ENCODE measurements at regions of chr9 and their contacts with region 1.

Region 1: DNA sequence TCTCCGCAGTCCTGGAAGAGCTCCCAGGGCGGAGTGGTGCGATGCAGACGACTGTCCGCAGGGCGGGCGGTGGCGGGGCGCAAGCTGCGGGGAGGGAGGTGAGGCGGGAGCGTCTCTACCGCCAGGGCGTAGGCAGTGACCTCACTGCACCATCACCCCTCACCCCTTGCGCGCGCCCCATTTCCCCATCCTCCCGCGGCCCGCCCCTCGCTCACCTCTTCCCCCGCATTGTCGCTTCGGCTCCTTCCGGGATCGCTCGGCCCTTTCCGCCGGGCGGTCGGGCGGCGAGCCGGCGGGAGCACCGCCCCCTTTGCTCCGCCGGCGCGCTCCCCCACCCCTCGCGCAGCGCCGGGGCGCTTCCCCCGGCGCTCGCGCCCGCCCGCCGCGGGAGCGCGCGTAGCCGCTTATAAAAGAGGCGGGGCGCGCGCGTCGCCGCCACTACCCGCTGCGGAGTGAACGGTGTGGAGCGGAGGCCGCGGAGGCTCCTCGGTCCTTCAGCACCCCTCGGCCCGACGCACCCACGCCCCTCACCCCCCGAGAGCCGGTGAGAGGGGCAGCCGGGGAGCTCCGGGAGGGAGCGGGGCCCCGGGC is at the start of gene SPTAN1:
- DNase-seq: peak; percentile 92 to 97 (median 96)
- H3K4me3 ChIP-seq: peak within 1 kb of the TSS; percentile 80
- H3K27ac ChIP-seq: peak within 1 kb of the TSS; percentile 95 to 99
- H3K4me1 ChIP-seq: peaks cover 8% of the 10 kb centered on the region
- H3K27me3 ChIP-seq: no peaks in the 10 kb centered on the region
- CTCF ChIP-seq: peak in 1 of 3 donors; percentile 45
- EP300 ChIP-seq: peak; percentile 10
- POLR2A ChIP-seq: peak; percentile 99
- total RNA-seq, gene SPTAN1: 140 to 301 (median 261) TPM

Region 2: GRCh38 chr9:128361986-128362646 is 190.1 kb before region 1 on chr9:
- intact Hi-C with region 1: loop called in 1 of 4 experiments (anchors 5 kb)
- DNase-seq: peak; percentile 84 to 90 (median 86)
- H3K4me3 ChIP-seq: peak overlapping the region; percentile 19
- H3K27ac ChIP-seq: peak overlapping the region in 1 of 2 donors; percentile 27
- H3K4me1 ChIP-seq: peaks cover 5% of the 10 kb centered on the region
- H3K27me3 ChIP-seq: no peaks in the 10 kb centered on the region
- CTCF ChIP-seq: peak in 2 of 3 donors; percentile 68 to 92
- EP300 ChIP-seq: no peak
- POLR2A ChIP-seq: peak; percentile 15

Region 3: DNA sequence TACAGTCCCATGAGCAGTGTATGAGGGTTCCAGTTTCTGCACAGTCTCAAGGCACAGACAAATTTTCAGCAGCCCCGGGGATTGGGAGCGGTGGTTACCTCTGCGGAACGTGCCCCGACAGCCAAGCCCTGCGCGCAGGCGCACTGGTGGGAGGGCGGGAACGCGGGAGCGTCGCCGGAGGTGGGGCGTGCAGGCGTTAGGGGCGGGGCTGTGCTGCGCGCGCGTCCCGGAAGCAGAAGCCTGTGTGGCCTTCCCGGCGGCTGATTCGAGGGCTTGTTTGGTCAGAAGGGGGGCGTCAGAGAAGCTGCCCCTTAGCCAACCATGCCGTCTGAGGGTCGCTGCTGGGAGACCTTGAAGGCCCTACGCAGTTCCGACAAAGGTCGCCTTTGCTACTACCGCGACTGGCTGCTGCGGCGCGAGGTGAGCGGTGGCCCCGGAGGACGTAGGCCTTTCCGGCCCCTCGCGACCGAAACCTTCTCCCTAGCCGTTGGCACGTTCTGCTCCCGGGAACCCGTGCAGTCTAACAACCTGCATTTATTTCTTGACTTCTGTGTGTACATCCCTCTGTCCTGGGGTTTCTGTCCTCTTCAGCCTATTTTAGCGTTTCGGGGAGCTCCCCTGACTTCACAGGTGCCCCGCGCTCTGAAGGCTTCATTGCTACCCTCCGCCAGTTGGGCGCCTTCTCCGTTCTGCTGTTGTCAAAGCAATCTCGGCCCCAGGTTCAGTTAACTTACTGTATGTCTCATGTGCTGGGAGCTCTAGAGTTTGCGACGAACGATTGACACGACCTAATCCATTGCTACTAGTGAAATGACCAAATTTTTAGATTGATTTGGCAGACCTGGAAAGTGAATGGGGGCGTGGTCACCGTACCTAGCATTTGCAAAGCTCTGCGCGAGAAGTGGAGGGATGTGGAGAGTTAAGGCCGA is 47.5 kb before region 1 on chr9 and contains the start of gene GLE1:
- intact Hi-C with region 1: loop called in 1 of 4 experiments (anchors 5 kb)
- DNase-seq: peak; percentile 94 to 98 (median 97)
- H3K4me3 ChIP-seq: peak within 1 kb of the TSS; percentile 95
- H3K27ac ChIP-seq: peak within 1 kb of the TSS in 1 of 2 donors; percentile 65
- H3K4me1 ChIP-seq: peaks cover 7% of the 10 kb centered on the region
- H3K27me3 ChIP-seq: no peaks in the 10 kb centered on the region
- CTCF ChIP-seq: no peak
- EP300 ChIP-seq: no peak
- POLR2A ChIP-seq: peak; percentile 72
- total RNA-seq, gene GLE1: 12.4 to 20.2 (median 19.0) TPM

Region 4: GRCh38 chr9:128688512-128689292 is 136.5 kb after region 1 on chr9 and contains the start of gene SET:
- intact Hi-C with region 1: loop called in 1 of 4 experiments (anchors 2 kb)
- DNase-seq: peak; percentile 95 to 97 (median 96)
- H3K4me3 ChIP-seq: peak within 1 kb of the TSS; percentile 83
- H3K27ac ChIP-seq: peak within 1 kb of the TSS; percentile 97 to 100
- H3K4me1 ChIP-seq: peaks cover 6% of the 10 kb centered on the region
- H3K27me3 ChIP-seq: no peaks in the 10 kb centered on the region
- CTCF ChIP-seq: no peak
- EP300 ChIP-seq: no peak
- POLR2A ChIP-seq: peak; percentile 94
- total RNA-seq, gene SET: 119 to 328 (median 291) TPM

Measured in ovary (tissue), 10 donors.